ENCODE measurements at regions of chr17 and their contacts with region 1.

Region 1: DNA sequence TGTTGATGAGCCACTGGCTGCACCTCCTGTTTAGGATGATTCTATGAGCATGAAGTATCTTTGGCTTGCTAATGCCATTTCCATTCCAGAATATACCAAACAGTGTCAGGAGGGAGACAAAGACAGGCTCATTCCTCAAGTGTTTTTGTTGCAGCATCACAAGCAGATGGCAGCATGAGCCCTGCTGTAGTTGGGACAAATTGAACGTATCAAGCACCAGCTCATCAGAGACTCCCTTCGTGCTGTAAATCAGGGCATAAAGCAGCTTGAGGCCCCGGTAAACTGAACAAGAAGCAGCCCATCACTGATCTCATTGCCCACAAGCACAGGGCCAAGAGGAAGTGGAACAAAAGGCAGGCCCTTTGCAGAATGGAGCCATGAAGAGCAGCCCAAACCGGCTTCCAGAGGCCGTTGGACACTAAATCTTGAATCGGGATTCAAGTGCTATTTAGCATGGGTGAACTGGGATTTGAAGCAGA is 45.9 kb upstream of the HS3ST3A1 start:
- DNase-seq: peak in 1 of 3 donors; percentile 5
- ATAC-seq: no peak
- H3K4me3 ChIP-seq: no peak overlapping the region
- H3K4me1 ChIP-seq: no peaks in the 10 kb centered on the region
- CTCF ChIP-seq: no peak

Region 2: DNA sequence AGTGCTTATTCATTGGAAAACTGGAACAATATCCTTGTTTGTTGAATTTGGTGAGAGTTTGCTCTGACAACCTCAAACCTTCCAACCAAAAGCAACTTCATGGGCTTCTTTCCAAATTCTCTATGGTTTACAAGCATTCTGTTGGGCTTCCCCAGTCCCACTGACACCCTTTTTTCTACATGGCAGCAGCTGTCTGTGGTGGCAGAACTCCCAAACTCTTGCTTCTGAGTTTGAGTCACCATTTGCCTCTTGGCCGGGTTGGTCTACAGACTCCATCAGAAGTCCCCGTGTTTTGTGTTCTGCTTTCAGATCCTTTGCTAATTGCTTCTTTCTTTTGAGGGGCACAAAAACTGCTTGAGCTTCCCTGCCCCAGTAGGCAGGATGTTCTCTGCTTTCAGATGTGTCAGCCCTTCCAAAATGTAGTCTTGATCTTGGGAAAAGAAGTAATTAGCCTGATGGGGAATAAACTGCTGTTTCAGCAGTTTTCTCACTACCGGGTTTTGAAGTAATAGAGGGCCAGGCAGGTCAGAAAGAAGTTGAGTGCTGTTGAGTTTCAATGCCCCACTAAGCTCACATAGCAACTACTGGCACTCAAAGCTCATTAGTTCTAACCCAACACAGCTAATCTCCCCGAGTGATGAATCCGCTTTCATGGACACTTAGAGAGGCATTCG is 126.5 kb before region 1 on chr17:
- intact Hi-C with region 1: no loop called
- DNase-seq: no peak
- ATAC-seq: no peak
- H3K4me3 ChIP-seq: no peak overlapping the region
- H3K4me1 ChIP-seq: no peaks in the 10 kb centered on the region
- CTCF ChIP-seq: no peak

Region 3: GRCh38 chr17:13704333-13704732 is 56.8 kb after region 1 on chr17:
- intact Hi-C with region 1: loop called in 1 of 2 experiments (anchors 10 kb)
- DNase-seq: no peak
- ATAC-seq: no peak
- H3K4me3 ChIP-seq: no peak overlapping the region
- H3K4me1 ChIP-seq: no peaks in the 10 kb centered on the region
- CTCF ChIP-seq: no peak

Region 4: DNA sequence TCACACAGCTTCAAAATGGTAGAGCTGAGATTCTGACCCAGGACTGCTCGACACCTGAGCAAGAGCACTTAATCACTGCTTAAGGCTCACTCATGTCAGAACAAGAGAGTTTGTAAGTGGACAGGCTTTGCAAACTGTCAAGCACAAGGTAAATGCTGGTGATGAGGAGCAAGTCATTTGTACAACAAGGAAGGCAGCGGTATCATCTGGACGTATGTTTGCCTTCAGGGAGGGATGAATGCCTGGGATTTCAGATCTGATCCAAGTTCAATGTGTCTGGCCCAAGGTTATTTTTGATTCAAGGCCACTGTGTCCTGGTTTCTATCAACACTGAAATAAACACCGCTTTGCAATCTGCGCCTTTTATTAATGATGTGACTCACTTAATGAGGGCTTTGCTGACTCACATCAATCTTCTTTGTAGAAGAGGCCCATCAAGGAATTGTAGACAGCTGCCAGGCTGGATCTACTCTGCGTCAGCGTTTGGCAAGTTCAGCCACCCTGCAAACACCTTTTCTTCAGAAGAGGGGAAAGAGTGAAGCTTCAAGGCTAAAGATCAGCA is 128.5 kb after region 1 on chr17:
- intact Hi-C with region 1: no loop called
- DNase-seq: no peak
- ATAC-seq: no peak
- H3K4me3 ChIP-seq: no peak overlapping the region
- H3K4me1 ChIP-seq: no peaks in the 10 kb centered on the region
- CTCF ChIP-seq: no peak

Measured in mucosa of descending colon (tissue), 3 donors.